ENCODE measurements at regions of chr1 and their contacts with region 1.

Region 1: DNA sequence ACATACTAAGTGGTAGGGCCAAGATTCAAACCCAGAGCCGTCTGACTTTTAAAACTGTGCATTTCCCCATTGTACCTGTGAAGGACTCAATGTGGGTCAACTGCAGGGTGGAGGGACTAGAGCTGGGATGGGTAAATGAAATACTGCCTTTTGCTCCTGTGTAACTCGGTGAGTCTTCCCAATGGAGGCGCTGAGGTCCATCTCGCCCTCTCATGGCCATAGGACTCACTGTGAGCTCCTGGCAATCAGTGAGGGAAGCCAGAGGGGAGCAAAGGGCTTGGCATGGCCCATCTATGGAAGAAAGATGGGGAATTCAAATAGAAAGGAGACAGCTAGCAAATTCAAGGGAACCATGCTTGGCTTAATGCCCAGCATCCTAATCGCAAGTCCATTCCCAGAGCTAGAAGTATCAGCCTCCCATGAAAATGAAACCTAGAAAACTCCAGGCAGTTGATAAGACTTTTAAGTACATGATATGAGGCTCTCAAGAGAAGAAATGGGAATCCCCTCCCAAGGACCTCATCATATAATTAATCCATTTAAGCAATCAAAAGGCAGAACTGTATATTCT is 25.4 kb upstream of the CGN start:
- DNase-seq: peak; percentile 27
- ATAC-seq: no peak; the same call in 1 of the 2 replicates
- H3K4me3 ChIP-seq: no peak overlapping the region
- H3K27ac ChIP-seq: no peak overlapping the region
- H3K4me1 ChIP-seq: no peaks in the 10 kb centered on the region
- H3K27me3 ChIP-seq: no peaks in the 10 kb centered on the region; the same call in 1 of the 2 replicates
- CTCF ChIP-seq: 0 out of 2 replicates have a peak, but pooled peaks have one; percentile 4
- POLR2A ChIP-seq: no peak
- RAD21 ChIP-seq: no peak

Region 2: DNA sequence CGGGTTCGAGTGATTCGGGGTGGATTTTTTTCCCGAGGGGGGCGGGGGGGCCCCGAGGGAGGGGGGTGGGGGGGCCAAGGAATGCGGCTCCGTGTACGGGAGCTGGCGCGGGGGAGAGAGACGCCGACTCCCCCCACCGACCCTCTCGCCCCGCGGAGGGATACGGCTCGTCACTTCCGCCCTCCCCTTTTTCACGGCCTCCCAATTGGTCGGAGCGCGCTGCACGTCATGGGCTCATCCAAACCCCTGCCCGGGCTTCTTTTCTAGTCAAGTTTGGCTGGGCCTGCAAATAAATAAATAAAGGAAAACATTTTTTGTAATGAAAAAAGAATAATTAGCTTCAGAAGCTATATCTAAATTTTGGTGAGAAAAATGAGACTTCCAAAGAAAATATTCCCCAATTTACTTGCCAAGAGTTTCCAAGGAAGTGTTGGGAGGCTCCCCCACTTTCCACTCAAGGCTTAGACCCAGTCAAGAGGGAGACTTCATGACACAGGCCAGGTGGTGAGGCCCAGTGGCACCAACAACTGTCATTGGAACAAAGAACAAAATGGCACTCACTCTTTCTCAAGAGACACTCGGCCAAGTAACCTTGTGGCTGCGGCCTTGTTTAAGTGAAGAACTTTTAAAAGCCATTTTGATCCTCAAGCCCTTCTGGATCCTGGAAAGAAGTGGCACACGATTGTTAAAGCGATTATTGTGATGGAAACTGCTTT is 26.3 kb before region 1 on chr1 and contains the start of gene POGZ:
- CTCF ChIA-PET with region 1: no interaction called
- POLR2A ChIA-PET with region 1: interaction called, 10 read pairs
- dilution Hi-C with region 1: no loop called
- in situ Hi-C with region 1: no loop called
- intact Hi-C with region 1: no loop called
- DNase-seq: peak; percentile 98
- ATAC-seq: peak; percentile 84
- H3K4me3 ChIP-seq: peak within 1 kb of the TSS; percentile 95
- H3K27ac ChIP-seq: peak within 1 kb of the TSS; percentile 100
- H3K4me1 ChIP-seq: peaks cover 5% of the 10 kb centered on the region
- H3K27me3 ChIP-seq: peaks cover 8% of the 10 kb centered on the region
- CTCF ChIP-seq: no peak
- POLR2A ChIP-seq: peak; percentile 64; the same call in 1 of the 2 replicates
- RAD21 ChIP-seq: no peak
- total RNA-seq, gene POGZ: 15.0 and 20.8 TPM in 2 replicates

Region 3: DNA sequence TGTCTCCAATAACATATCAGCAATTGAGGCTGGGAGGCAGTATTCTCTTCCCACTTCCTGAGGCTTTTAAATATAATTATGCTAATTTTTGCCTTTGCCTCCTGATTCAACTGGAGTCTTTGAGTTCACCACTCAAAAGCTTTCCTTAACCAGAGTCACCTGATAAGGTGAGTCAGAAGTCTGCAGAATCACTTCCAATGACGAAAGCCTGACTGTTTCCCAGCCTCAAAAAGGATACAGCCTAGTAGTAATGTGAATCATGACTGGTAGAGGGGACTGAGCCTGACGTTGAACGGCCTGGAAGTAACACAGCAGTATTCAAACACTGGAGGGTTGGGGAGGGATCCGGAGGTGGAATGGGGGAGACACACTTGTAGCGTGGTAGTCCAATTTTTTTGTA is 287.9 kb after region 1 on chr1:
- CTCF ChIA-PET with region 1: no interaction called
- POLR2A ChIA-PET with region 1: no interaction called
- dilution Hi-C with region 1: no loop called
- in situ Hi-C with region 1: no loop called
- intact Hi-C with region 1: no loop called
- DNase-seq: peak; percentile 72
- ATAC-seq: no peak
- H3K4me3 ChIP-seq: no peak overlapping the region
- H3K27ac ChIP-seq: no peak overlapping the region
- H3K4me1 ChIP-seq: no peaks in the 10 kb centered on the region
- H3K27me3 ChIP-seq: peaks cover 3% of the 10 kb centered on the region
- CTCF ChIP-seq: no peak
- POLR2A ChIP-seq: no peak
- RAD21 ChIP-seq: no peak